A673 (cell line): ENCODE measurements at regions of chr11 and their contacts with region 1.

Region 1: GRCh38 chr11:92886243-92886905 is 83.1 kb upstream of the MTNR1B start:
- DNase-seq: peak; percentile 84
- H3K4me3 ChIP-seq: no peak overlapping the region
- H3K27ac ChIP-seq: no peak overlapping the region
- H3K4me1 ChIP-seq: peaks cover 6% of the 10 kb centered on the region
- H3K27me3 ChIP-seq: no peaks in the 10 kb centered on the region
- CTCF ChIP-seq: peak; percentile 89

Region 2: GRCh38 chr11:91513734-91514133 is 1372.6 kb before region 1 on chr11:
- CTCF ChIA-PET with region 1: no interaction called
- POLR2A ChIA-PET with region 1: no interaction called
- intact Hi-C with region 1: loop called (anchors 10 kb)
- DNase-seq: peak; percentile 56
- H3K4me3 ChIP-seq: no peak overlapping the region
- H3K27ac ChIP-seq: no peak overlapping the region
- H3K4me1 ChIP-seq: no peaks in the 10 kb centered on the region
- H3K27me3 ChIP-seq: no peaks in the 10 kb centered on the region
- CTCF ChIP-seq: peak; percentile 81

Region 3: GRCh38 chr11:92152245-92152644 is 734.1 kb before region 1 on chr11:
- CTCF ChIA-PET with region 1: no interaction called
- POLR2A ChIA-PET with region 1: no interaction called
- intact Hi-C with region 1: loop called (anchors 5 kb)
- DNase-seq: peak; percentile 39
- H3K4me3 ChIP-seq: no peak overlapping the region
- H3K27ac ChIP-seq: no peak overlapping the region
- H3K4me1 ChIP-seq: no peaks in the 10 kb centered on the region
- H3K27me3 ChIP-seq: no peaks in the 10 kb centered on the region
- CTCF ChIP-seq: peak; percentile 54

Region 4: GRCh38 chr11:92436034-92436920 is 450.1 kb before region 1 on chr11:
- CTCF ChIA-PET with region 1: no interaction called
- POLR2A ChIA-PET with region 1: no interaction called
- intact Hi-C with region 1: loop called (anchors 10 kb)
- DNase-seq: no peak
- H3K4me3 ChIP-seq: no peak overlapping the region
- H3K27ac ChIP-seq: peak overlapping the region; percentile 12
- H3K4me1 ChIP-seq: peaks cover 7% of the 10 kb centered on the region
- H3K27me3 ChIP-seq: no peaks in the 10 kb centered on the region
- CTCF ChIP-seq: no peak

Region 5: GRCh38 chr11:92735039-92735438 is 151.3 kb before region 1 on chr11:
- CTCF ChIA-PET with region 1: interaction called, 3 read pairs
- POLR2A ChIA-PET with region 1: no interaction called
- intact Hi-C with region 1: loop called (anchors 5 kb)
- DNase-seq: peak; percentile 46
- H3K4me3 ChIP-seq: no peak overlapping the region
- H3K27ac ChIP-seq: no peak overlapping the region
- H3K4me1 ChIP-seq: peaks cover 8% of the 10 kb centered on the region
- H3K27me3 ChIP-seq: peaks cover 3% of the 10 kb centered on the region
- CTCF ChIP-seq: peak; percentile 58